Activated CD4-positive, alpha-beta memory T cell treated with anti-CD3 and anti-CD28 coated beads for 36 hours (primary cell): ENCODE measurements at regions of chr6 and their contacts with region 1.

Region 1: GRCh38 chr6:34074064-34074742 is 71.7 kb downstream of the GRM4 start:
- DNase-seq: no peak
- H3K4me3 Mint-ChIP-seq: no peak overlapping the region
- H3K27ac Mint-ChIP-seq: no peak overlapping the region
- H3K4me1 Mint-ChIP-seq: no peaks in the 10 kb centered on the region
- H3K27me3 Mint-ChIP-seq: no peaks in the 10 kb centered on the region

Region 2: DNA sequence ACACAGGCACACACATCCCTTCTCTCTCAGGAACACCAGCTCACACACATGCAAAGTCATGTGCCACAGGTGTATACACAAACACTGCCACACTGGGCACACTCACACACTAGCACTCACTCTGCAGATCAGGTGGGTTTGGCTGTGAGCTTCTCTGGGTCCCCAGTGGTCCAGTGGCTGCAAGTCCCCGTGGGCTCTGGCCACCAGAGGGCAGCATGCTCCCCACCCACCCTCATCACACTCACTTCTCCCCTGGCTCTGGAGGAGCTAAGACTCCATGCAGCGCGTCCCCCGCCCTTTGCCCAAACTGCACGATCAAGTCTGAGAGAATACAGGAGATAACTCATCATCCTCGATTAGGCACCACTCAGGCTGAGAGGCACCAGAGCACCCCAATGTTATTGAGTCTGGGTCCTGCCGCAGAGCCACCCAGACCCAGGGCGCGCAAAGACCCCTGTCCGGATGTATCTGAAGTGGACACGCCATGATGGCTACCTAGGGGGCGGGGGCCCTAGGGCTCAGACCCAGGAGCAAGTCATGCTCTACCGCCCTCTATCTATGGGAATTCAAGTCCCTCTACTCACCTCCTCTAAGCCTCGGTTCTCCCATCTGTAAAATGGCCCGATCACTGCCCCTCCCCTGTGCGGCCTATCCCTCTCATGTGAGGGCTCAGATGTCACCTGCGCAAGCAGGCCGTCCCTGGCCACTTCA is 18.8 kb before region 1 on chr6:
- CTCF ChIA-PET with region 1: interaction called, 12 read pairs
- POLR2A ChIA-PET with region 1: no interaction called
- intact Hi-C with region 1: no loop called
- DNase-seq: peak; percentile 75
- H3K4me3 Mint-ChIP-seq: no peak overlapping the region
- H3K27ac Mint-ChIP-seq: no peak overlapping the region
- H3K4me1 Mint-ChIP-seq: no peaks in the 10 kb centered on the region
- H3K27me3 Mint-ChIP-seq: no peaks in the 10 kb centered on the region